ENCODE measurements at regions of chr14 and their contacts with region 1.

Region 1: DNA sequence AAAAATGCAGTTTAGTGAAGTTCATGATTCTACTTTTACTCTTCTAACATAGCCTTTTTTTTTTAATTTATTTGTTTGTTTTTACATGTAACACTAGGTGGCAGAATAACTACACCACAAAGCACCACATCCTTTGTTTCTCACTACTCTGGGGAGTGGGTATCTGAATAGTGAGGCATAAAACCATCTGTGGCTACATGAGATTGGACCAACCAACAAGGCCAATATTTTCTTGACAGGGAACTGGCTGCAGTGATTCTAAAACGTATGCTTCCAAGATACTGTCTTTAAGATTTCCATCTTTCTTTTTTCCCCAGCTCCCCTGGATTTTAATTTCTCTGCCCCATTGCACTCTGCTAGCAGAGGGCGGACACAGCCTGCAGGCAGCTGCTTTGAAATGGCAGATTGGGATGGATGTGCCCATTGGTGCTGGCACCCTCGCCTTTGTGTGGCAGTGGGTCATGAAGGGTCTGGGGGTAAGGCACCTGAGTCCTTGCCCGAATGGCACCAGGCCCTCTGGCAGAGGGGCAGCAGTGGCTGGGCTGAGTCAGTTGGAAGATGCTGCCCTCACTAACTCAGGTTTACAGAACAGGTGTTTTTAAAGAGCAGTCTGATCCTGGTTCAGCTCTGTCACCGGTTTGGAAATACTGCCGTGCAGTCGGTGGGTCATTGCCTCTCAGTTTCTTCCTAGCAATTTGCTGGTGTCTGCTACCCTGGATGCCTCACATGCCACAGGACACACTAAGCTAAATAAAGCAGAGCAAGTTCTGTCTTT is 429.1 kb downstream of the RAD51B start:
- DNase-seq: no peak
- H3K4me3 ChIP-seq: no peak overlapping the region
- H3K27ac ChIP-seq: peak overlapping the region; percentile 86
- H3K4me1 ChIP-seq: peaks cover 83% of the 10 kb centered on the region
- H3K27me3 ChIP-seq: no peaks in the 10 kb centered on the region
- CTCF ChIP-seq: peak; percentile 71

Region 2: DNA sequence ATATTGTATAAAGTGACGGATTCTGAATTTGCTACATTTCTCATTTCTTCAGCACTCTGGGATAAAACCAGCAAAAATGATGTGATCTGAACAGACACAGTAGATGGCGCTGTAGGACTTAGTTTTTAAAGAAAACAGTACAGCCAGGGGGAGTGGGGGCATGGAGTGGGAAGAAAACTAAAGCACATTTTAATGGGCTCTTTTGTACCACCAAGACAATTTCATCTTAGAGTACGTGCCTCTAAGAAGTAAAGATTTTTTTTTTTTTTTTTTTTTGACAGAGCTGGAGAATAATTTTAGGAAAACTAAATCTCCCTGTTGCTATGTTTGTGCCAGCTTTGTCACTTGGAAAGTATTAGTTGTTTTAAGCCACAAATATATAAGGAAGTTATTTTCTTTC is 304.7 kb before region 1 on chr14:
- intact Hi-C with region 1: loop called (anchors 5 kb)
- DNase-seq: peak; percentile 18
- H3K4me3 ChIP-seq: no peak overlapping the region
- H3K27ac ChIP-seq: peak overlapping the region; percentile 10
- H3K4me1 ChIP-seq: peaks cover 34% of the 10 kb centered on the region
- H3K27me3 ChIP-seq: no peaks in the 10 kb centered on the region
- CTCF ChIP-seq: peak; percentile 81

Region 3: GRCh38 chr14:68140111-68140741 is 108.4 kb before region 1 on chr14:
- intact Hi-C with region 1: loop called (anchors 10 kb)
- DNase-seq: no peak
- H3K4me3 ChIP-seq: no peak overlapping the region
- H3K27ac ChIP-seq: peak overlapping the region; percentile 67
- H3K4me1 ChIP-seq: peaks cover 72% of the 10 kb centered on the region
- H3K27me3 ChIP-seq: no peaks in the 10 kb centered on the region
- CTCF ChIP-seq: no peak

Region 4: GRCh38 chr14:68172627-68173026 is 76.0 kb before region 1 on chr14:
- intact Hi-C with region 1: no loop called
- DNase-seq: no peak
- H3K4me3 ChIP-seq: no peak overlapping the region
- H3K27ac ChIP-seq: no peak overlapping the region
- H3K4me1 ChIP-seq: no peaks in the 10 kb centered on the region
- H3K27me3 ChIP-seq: no peaks in the 10 kb centered on the region
- CTCF ChIP-seq: no peak

Region 5: DNA sequence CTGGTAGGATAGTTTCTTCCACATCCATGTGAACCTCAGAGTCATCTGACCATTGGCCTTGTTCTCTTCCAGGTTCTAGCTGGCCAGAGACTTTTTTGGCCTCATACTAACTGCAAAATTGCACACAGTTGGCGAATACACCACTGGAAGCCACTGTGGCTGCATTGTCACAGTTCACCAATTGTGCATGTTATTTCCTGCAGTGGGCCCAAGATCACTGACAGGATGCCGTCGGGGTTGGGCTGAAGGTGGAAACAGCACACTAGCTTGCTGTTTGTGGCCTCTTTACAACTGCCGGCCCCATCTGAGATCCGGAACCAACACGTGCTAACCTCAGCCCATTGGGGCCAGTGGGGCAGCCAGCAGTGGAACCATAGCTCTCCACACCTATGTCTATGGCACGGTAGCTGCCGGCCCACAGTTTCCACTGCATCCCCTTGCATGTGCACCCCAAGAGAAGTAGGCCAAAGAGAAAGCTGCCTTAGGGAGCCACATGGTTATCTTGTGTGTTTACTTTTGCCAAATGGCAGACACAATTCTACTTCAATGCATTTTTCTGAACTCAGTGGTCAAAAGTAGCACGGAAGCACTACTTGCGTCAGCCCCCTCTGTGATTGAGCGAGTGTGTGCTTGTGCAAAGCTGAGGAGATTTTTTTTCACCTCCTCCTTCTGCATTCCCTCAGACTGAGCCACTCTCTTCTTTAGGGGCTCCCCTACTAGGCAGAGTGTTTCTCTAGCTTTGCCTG is 34.9 kb after region 1 on chr14:
- intact Hi-C with region 1: no loop called
- DNase-seq: peak; percentile 29
- H3K4me3 ChIP-seq: no peak overlapping the region
- H3K27ac ChIP-seq: peak overlapping the region; percentile 77
- H3K4me1 ChIP-seq: peaks cover 29% of the 10 kb centered on the region
- H3K27me3 ChIP-seq: no peaks in the 10 kb centered on the region
- CTCF ChIP-seq: no peak

Region 6: DNA sequence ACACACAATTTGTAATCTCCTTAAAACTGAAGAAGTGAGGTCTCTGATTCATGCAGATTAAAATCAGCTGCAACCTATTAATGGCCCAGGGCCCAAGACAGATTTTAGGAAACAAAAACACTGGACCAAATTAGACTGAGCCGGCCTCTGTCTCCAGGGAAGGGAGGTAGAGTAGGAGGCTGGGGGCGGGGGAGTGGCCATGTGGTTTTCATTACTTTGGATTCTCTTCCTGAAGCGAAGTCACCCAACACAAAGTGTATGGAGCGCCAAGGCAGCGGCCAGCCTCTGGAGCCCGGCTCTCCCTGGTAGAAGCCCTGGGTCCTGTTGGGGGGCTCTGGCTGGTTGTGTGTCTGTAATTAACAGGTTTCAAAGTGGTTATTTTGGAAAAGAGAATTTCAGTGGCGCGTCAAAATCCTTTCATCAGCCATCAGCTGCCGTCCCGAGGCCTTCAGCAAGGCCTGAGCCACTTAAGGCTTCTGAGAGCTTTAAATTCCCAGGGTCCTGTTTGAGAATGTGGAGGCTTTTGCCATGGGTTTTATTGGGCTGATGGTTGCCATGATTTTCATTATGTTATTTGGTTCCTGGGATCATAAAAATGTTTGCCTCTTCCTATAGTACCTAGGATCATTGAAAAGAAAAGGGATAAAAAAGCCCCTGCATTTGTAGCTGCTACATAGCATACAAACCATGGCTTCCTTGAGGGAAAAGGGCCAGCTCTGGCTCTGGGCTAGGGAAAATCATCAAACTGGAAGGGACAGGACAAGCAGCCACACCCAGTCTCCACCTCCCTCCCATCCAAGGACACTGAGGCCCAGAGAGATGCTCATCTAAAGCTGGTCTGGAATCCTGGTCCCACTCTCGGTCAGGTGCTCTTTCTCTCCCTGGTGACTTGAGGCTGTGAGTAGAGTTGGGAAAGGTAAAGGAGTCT is 261.8 kb after region 1 on chr14:
- intact Hi-C with region 1: no loop called
- DNase-seq: peak; percentile 58
- H3K4me3 ChIP-seq: no peak overlapping the region
- H3K27ac ChIP-seq: peak overlapping the region; percentile 67
- H3K4me1 ChIP-seq: peaks cover 54% of the 10 kb centered on the region
- H3K27me3 ChIP-seq: no peaks in the 10 kb centered on the region
- CTCF ChIP-seq: no peak

Region 7: GRCh38 chr14:68649476-68650189 is 401.0 kb after region 1 on chr14:
- intact Hi-C with region 1: loop called (anchors 10 kb)
- DNase-seq: no peak
- H3K4me3 ChIP-seq: no peak overlapping the region
- H3K27ac ChIP-seq: no peak overlapping the region
- H3K4me1 ChIP-seq: peaks cover 48% of the 10 kb centered on the region
- H3K27me3 ChIP-seq: no peaks in the 10 kb centered on the region
- CTCF ChIP-seq: no peak

Region 8: DNA sequence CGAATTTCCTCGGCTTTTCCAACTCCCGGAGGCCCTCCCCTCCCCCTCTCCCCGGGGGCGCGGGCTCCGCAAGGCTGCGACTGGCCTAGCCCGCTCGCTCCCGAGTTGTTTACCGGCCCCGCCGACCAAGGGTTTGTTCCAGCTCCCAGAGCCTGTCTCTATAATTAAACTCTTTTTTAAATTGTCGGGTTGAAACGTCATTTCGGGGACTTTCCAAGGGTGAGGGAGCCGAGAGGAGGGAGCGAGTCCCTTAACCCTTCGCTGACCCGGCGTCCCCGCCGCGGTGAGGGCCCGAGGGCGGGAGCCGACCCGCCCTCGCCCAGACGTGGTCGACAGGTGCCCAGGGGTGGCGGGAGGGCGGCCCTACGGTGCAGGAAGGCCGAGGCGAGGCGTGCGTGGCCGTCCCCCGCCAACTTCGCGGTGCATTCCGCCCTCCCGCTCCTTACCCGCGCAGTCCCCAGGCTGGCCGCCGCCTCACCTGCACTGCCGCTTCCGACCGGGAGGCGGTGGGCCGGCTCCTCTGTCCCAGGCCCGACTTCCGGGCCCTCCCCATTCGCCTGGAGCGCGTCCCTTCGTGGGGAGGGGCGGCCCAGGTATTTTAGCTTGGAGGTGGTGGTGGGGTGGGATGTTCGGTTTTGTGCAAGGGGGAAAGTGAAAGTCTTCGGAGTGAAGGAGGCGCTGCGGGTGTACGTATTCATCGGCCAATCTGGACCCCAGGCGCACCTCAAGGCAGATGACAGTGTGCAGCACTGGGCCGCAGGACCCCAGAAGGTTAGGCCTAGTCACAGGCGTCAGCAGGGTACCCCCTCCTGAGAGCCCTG is 547.1 kb after region 1 on chr14:
- intact Hi-C with region 1: loop called (anchors 5 kb)
- DNase-seq: peak; percentile 87
- H3K4me3 ChIP-seq: peak overlapping the region; percentile 96
- H3K27ac ChIP-seq: peak overlapping the region; percentile 100
- H3K4me1 ChIP-seq: peaks cover 46% of the 10 kb centered on the region
- H3K27me3 ChIP-seq: no peaks in the 10 kb centered on the region
- CTCF ChIP-seq: peak; percentile 86

Region 9: GRCh38 chr14:68816262-68816942 is 567.7 kb after region 1 on chr14:
- intact Hi-C with region 1: loop called (anchors 5 kb)
- DNase-seq: peak; percentile 90
- H3K4me3 ChIP-seq: peak overlapping the region; percentile 69
- H3K27ac ChIP-seq: peak overlapping the region; percentile 99
- H3K4me1 ChIP-seq: peaks cover 44% of the 10 kb centered on the region
- H3K27me3 ChIP-seq: no peaks in the 10 kb centered on the region
- CTCF ChIP-seq: peak; percentile 97

Measured in left ventricle myocardium inferior (tissue), 1 donor.